Left ventricle myocardium inferior (tissue), 1 donor: ENCODE measurements at regions of chr7 and their contacts with region 1.

Region 1: GRCh38 chr7:131107337-131108211 is 220.1 kb upstream of the MKLN1 start:
- DNase-seq: peak; percentile 64
- H3K4me3 ChIP-seq: peak overlapping the region; percentile 91
- H3K27ac ChIP-seq: peak overlapping the region; percentile 99
- H3K4me1 ChIP-seq: peaks cover 90% of the 10 kb centered on the region
- H3K27me3 ChIP-seq: no peaks in the 10 kb centered on the region
- CTCF ChIP-seq: no peak

Region 2: GRCh38 chr7:131145026-131145425 is 37.5 kb after region 1 on chr7:
- intact Hi-C with region 1: no loop called
- DNase-seq: no peak
- H3K4me3 ChIP-seq: no peak overlapping the region
- H3K27ac ChIP-seq: no peak overlapping the region
- H3K4me1 ChIP-seq: peaks cover 13% of the 10 kb centered on the region
- H3K27me3 ChIP-seq: no peaks in the 10 kb centered on the region
- CTCF ChIP-seq: no peak

Region 3: GRCh38 chr7:131302876-131303707 is 195.5 kb after region 1 on chr7:
- intact Hi-C with region 1: loop called (anchors 10 kb)
- DNase-seq: peak; percentile 23
- H3K4me3 ChIP-seq: no peak overlapping the region
- H3K27ac ChIP-seq: peak overlapping the region; percentile 73
- H3K4me1 ChIP-seq: peaks cover 49% of the 10 kb centered on the region
- H3K27me3 ChIP-seq: no peaks in the 10 kb centered on the region
- CTCF ChIP-seq: peak; percentile 72